Natural killer cell (primary cell): ENCODE measurements at regions of chr13 and their contacts with region 1.

Region 1: GRCh38 chr13:36346222-36347083 is at the start of gene SPART:
- DNase-seq: peak; percentile 90 to 92
- ATAC-seq: peak; percentile 82 to 94 (median 85)
- H3K4me3 ChIP-seq: peak within 1 kb of the TSS; percentile 69
- H3K4me3 Mint-ChIP-seq: peak within 1 kb of the TSS; percentile 99
- H3K27ac ChIP-seq: peak within 1 kb of the TSS; percentile 93
- H3K27ac Mint-ChIP-seq: peak within 1 kb of the TSS; percentile 98 to 99
- H3K4me1 ChIP-seq: peaks cover 8% of the 10 kb centered on the region
- H3K4me1 Mint-ChIP-seq: peaks cover 36 to 38% of the 10 kb centered on the region in 2 donors
- H3K27me3 ChIP-seq: no peaks in the 10 kb centered on the region
- H3K27me3 Mint-ChIP-seq: peaks cover 0 to 5% of the 10 kb centered on the region in 2 donors
- CTCF ChIP-seq: peak; percentile 93
- total RNA-seq, gene SPART: 29.2 to 31.2 (median 30.6) TPM

Region 2: DNA sequence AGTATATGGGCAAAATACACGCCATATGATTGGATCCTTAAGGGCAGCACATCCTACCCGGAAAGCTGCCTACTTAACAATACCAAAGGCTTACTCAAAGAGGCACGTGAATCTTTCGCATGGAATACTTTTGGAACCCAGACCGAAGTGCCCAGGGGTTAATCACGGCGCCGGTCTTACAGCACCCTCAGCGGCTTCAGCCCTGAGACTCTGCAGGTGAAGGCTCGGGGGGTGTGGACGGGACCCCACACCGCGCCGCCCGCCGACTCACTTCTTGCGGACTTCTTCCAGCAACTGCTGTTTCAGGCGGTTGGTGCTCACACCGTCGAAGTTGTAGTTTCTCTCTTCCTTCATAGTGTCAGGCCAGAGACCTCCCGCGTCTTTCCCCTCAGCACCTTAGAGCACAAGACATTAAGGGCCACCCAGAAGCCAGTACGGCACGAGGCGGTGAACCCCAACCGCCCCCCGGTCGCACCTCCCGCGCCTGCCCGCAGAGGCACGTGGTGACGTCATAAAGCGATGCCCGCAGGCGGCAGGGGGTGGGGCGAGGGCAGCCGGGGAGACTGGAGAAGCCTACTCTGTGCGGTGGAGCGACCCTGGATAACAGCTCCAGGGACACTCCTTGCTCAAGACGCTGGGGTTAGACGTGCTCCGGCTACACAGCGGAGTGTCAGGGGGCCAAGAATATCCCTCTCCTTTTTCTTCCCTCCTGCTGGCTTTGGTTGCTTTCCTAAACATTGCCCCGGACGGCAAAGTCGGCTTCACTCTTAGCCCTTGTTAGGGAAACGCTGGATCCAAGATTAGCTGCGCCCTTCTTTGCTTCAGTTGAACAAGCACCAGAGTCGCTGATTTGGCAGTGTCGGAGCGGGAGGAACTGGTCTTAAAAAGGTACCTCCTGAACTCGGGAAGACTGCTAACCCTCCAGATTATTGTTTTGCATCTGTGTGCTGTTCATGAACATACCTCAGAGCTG is 48.8 kb before region 1 on chr13 and contains the start of gene CCDC169:
- intact Hi-C with region 1: loop called (anchors 5 kb)
- DNase-seq: peak; percentile 54 to 67
- ATAC-seq: peak; percentile 73 to 91 (median 89)
- H3K4me3 ChIP-seq: peak within 1 kb of the TSS; percentile 41
- H3K4me3 Mint-ChIP-seq: peak within 1 kb of the TSS; percentile 89
- H3K27ac ChIP-seq: no peak within 1 kb of the TSS
- H3K27ac Mint-ChIP-seq: peak within 1 kb of the TSS; percentile 10 to 83
- H3K4me1 ChIP-seq: peaks cover 13% of the 10 kb centered on the region
- H3K4me1 Mint-ChIP-seq: peaks cover 12 to 19% of the 10 kb centered on the region in 2 donors
- H3K27me3 ChIP-seq: peaks cover 8% of the 10 kb centered on the region
- H3K27me3 Mint-ChIP-seq: peaks cover 29 to 34% of the 10 kb centered on the region in 2 donors
- CTCF ChIP-seq: no peak
- total RNA-seq, gene CCDC169: not detected

Region 3: DNA sequence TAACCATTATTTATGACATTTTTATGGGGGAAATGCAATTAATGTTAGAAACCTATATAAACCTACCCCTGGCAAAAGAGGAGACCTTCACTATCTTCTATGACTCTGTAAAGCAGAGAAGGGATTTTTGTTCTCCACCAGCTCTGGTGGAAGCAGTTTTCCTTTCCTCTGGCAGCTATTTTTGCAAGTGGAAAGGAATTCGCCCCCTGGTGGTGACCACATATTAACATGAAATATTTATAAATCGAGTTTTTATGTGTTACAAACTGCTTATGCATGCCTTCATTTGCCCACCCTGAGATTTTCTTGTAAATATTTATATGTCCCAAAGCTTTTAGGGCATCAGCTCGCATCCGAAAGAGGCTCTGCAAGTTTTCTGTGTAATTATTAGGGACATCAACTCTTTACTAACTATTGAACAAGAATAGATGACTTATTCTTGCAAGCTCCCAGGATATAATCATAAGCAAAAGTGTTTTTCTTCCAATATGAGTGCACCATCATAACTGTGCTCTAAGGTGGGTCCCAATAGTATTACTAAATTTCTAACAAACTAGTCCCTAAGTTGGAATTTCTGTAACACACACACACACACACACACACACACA is 389.8 kb after region 1 on chr13:
- intact Hi-C with region 1: loop called (anchors 1 kb)
- DNase-seq: peak in 1 of 2 donors; percentile 62
- ATAC-seq: no peak
- H3K4me3 ChIP-seq: no peak overlapping the region
- H3K4me3 Mint-ChIP-seq: no peak overlapping the region
- H3K27ac ChIP-seq: no peak overlapping the region
- H3K27ac Mint-ChIP-seq: no peak overlapping the region
- H3K4me1 ChIP-seq: no peaks in the 10 kb centered on the region
- H3K4me1 Mint-ChIP-seq: no peaks in the 10 kb centered on the region
- H3K27me3 ChIP-seq: no peaks in the 10 kb centered on the region
- H3K27me3 Mint-ChIP-seq: peaks cover 0 to 5% of the 10 kb centered on the region in 2 donors
- CTCF ChIP-seq: peak; percentile 71

Region 4: GRCh38 chr13:36818804-36819738 is 472.6 kb after region 1 on chr13 and contains the start of gene RFXAP:
- intact Hi-C with region 1: loop called (anchors 2 kb)
- DNase-seq: peak; percentile 90 to 97
- ATAC-seq: peak; percentile 91 to 95 (median 92)
- H3K4me3 ChIP-seq: peak within 1 kb of the TSS; percentile 78
- H3K4me3 Mint-ChIP-seq: peak within 1 kb of the TSS; percentile 95
- H3K27ac ChIP-seq: peak within 1 kb of the TSS; percentile 80
- H3K27ac Mint-ChIP-seq: peak within 1 kb of the TSS; percentile 87 to 90
- H3K4me1 ChIP-seq: peaks cover 19% of the 10 kb centered on the region
- H3K4me1 Mint-ChIP-seq: peaks cover 42 to 45% of the 10 kb centered on the region in 2 donors
- H3K27me3 ChIP-seq: no peaks in the 10 kb centered on the region
- H3K27me3 Mint-ChIP-seq: peaks cover 17 to 21% of the 10 kb centered on the region in 2 donors
- CTCF ChIP-seq: no peak
- total RNA-seq, gene RFXAP: 6.0 to 13.3 (median 11.3) TPM

Region 5: GRCh38 chr13:36999054-36999714 is 652.7 kb after region 1 on chr13 and contains the start of gene ALG5:
- intact Hi-C with region 1: loop called (anchors 1 kb)
- DNase-seq: peak; percentile 95 to 97
- ATAC-seq: peak; percentile 74 to 91 (median 78)
- H3K4me3 ChIP-seq: peak within 1 kb of the TSS; percentile 84
- H3K4me3 Mint-ChIP-seq: peak within 1 kb of the TSS; percentile 99
- H3K27ac ChIP-seq: peak within 1 kb of the TSS; percentile 99
- H3K27ac Mint-ChIP-seq: peak within 1 kb of the TSS; percentile 99 to 100
- H3K4me1 ChIP-seq: peaks cover 15% of the 10 kb centered on the region
- H3K4me1 Mint-ChIP-seq: peaks cover 33 to 46% of the 10 kb centered on the region in 2 donors
- H3K27me3 ChIP-seq: no peaks in the 10 kb centered on the region
- H3K27me3 Mint-ChIP-seq: no peaks in the 10 kb centered on the region
- CTCF ChIP-seq: peak; percentile 99
- total RNA-seq, gene ALG5: 20.2 to 25.0 (median 24.5) TPM

Region 6: DNA sequence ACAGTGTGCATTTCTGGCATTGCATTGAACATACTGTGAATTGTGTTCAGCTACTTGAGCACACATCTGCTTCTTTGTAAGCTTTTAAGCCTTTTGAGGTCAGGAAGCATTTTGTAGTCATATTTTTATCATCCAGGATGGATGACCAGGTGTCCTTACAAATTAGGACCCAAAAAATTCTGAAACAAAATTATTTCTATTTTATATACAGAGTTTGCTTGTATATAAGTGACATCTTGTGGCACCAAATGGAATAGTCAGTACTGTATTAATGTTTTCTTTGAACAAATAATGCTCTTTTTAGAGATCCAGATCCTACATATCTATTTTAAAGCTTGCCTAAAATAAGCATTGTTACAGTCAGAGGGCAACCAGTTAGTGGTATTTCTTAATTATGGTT is 722.5 kb after region 1 on chr13:
- intact Hi-C with region 1: loop called (anchors 5 kb)
- DNase-seq: no peak
- ATAC-seq: no peak
- H3K4me3 ChIP-seq: no peak overlapping the region
- H3K4me3 Mint-ChIP-seq: no peak overlapping the region
- H3K27ac ChIP-seq: no peak overlapping the region
- H3K27ac Mint-ChIP-seq: no peak overlapping the region
- H3K4me1 ChIP-seq: no peaks in the 10 kb centered on the region
- H3K4me1 Mint-ChIP-seq: no peaks in the 10 kb centered on the region
- H3K27me3 ChIP-seq: no peaks in the 10 kb centered on the region
- H3K27me3 Mint-ChIP-seq: peaks cover 16 to 37% of the 10 kb centered on the region in 2 donors
- CTCF ChIP-seq: no peak